Heart left ventricle (tissue), 16 donors: ENCODE measurements at regions of chr14 and their contacts with region 1.

Region 1: DNA sequence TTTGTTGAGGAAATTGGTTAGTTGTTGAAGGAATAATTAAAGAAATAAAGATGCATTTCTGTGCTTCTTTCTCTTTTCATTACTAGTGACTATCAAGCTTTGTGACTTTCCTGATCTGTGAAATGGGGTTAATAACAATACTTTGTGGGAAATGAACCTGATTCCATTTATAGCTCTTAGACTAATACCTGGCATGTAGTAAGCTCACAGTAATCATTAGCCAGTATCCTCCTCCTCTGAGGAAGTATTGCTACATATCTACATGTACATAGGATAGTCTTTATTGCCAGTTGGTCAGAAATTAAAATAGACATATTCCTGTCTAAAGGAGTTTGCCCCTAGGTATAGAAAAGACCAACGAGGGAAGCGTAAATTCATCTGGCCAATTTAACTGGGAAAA is 1.8 kb upstream of the CCDC198 start:
- DNase-seq: no peak
- ATAC-seq: no peak
- H3K4me3 ChIP-seq: no peak overlapping the region
- H3K27ac ChIP-seq: no peak overlapping the region
- H3K4me1 ChIP-seq: no peaks in the 10 kb centered on the region
- H3K27me3 ChIP-seq: no peaks in the 10 kb centered on the region
- CTCF ChIP-seq: no peak
- POLR2A ChIP-seq: no peak

Region 2: GRCh38 chr14:57244106-57244505 is 251.3 kb before region 1 on chr14:
- intact Hi-C with region 1: no loop called
- DNase-seq: no peak
- ATAC-seq: peak in 1 of 4 donors; percentile 57
- H3K4me3 ChIP-seq: no peak overlapping the region
- H3K27ac ChIP-seq: no peak overlapping the region
- H3K4me1 ChIP-seq: peaks cover 0 to 2% (median 0%) of the 10 kb centered on the region in 12 donors
- H3K27me3 ChIP-seq: no peaks in the 10 kb centered on the region
- CTCF ChIP-seq: no peak
- POLR2A ChIP-seq: no peak

Region 3: DNA sequence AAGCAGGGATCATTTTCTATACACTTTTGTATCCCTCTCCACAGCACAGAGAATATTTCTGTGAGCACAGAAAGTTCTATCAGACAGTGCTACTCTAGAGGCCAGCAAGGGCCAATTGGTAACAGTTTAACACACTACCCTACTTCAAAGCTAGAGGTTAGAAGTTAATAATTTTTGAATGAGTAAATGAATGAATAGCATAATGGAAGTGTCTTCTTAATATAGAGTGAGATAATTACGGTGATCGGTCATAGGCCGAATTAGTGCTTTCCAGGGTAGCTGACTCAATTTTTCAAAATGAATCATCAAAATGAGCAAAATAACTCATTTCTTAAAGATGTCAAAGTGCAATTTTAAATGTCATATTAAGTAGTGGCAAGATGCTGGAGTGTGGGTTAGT is 65.3 kb after region 1 on chr14:
- intact Hi-C with region 1: no loop called
- DNase-seq: no peak
- ATAC-seq: no peak
- H3K4me3 ChIP-seq: no peak overlapping the region
- H3K27ac ChIP-seq: no peak overlapping the region
- H3K4me1 ChIP-seq: peaks cover 0 to 5% (median 0%) of the 10 kb centered on the region in 12 donors
- H3K27me3 ChIP-seq: no peaks in the 10 kb centered on the region
- CTCF ChIP-seq: no peak
- POLR2A ChIP-seq: no peak

Region 4: GRCh38 chr14:58166005-58166983 is 670.9 kb after region 1 on chr14:
- intact Hi-C with region 1: loop called in 1 of 10 experiments (anchors 5 kb)
- DNase-seq: peak; percentile 74 to 90 (median 81)
- ATAC-seq: peak; percentile 42 to 82 (median 76)
- H3K4me3 ChIP-seq: no peak overlapping the region
- H3K27ac ChIP-seq: no peak overlapping the region
- H3K4me1 ChIP-seq: peaks cover 0 to 5% (median 0%) of the 10 kb centered on the region in 12 donors
- H3K27me3 ChIP-seq: no peaks in the 10 kb centered on the region
- CTCF ChIP-seq: peak; percentile 79 to 96 (median 91)
- POLR2A ChIP-seq: no peak